ENCODE measurements at regions of chr6 and their contacts with region 1.

Region 1: DNA sequence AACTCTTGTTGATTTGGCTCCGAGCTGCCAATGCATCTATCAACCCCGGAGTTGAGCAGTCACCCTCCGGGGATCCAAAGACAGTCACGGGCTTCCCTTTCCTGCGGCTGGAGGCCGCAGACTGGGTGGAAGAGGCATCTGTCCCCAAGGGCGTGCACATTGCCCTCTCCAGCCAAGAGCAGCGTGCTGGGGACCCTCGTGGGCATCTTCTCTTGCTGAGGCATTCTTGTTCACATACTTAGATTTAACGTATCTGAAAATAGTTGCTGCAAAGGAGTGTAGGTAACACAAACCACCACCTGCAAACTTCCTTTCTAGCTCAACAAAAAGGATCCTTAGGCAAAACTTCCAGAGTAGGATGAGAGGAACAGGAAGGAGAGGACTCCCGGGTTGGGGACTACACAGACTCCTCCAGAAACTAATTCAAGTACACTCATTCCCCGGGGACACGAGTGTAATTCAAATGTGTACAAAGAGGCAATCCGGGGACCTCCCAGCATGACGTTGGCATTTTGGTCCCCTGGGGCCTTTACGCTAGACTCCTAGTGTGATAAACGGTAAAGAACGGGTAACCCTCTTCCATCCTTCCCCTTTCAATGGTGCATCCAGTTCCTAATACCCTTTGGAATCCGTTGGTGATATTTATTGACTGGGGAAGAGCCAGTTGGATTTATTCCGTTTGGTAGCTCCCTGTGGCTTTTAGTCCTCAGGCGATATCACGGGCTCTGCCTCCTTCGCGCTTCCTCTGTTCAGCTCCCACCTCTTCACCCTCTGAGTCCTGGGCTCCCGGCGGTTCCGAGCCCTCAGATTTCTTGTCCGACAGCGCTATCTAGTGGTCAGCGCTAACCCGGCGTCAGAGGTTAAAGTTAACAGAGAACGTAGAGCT is 2.7 kb upstream of the COL12A1 start:
- DNase-seq: peak; percentile 81 to 85
- H3K4me3 ChIP-seq: no peak overlapping the region
- H3K27ac ChIP-seq: no peak overlapping the region
- H3K4me1 ChIP-seq: peaks cover 28 to 43% of the 10 kb centered on the region in 2 donors
- H3K27me3 ChIP-seq: no peaks in the 10 kb centered on the region
- CTCF ChIP-seq: peak; percentile 64 to 92 (median 80)
- POLR2A ChIP-seq: no peak

Region 2: GRCh38 chr6:74091136-74091793 is 1117.3 kb before region 1 on chr6:
- intact Hi-C with region 1: loop called (anchors 5 kb)
- DNase-seq: no peak
- H3K4me3 ChIP-seq: no peak overlapping the region
- H3K27ac ChIP-seq: no peak overlapping the region
- H3K4me1 ChIP-seq: no peaks in the 10 kb centered on the region
- H3K27me3 ChIP-seq: no peaks in the 10 kb centered on the region
- CTCF ChIP-seq: peak; percentile 21 to 67 (median 60)
- POLR2A ChIP-seq: no peak

Region 3: DNA sequence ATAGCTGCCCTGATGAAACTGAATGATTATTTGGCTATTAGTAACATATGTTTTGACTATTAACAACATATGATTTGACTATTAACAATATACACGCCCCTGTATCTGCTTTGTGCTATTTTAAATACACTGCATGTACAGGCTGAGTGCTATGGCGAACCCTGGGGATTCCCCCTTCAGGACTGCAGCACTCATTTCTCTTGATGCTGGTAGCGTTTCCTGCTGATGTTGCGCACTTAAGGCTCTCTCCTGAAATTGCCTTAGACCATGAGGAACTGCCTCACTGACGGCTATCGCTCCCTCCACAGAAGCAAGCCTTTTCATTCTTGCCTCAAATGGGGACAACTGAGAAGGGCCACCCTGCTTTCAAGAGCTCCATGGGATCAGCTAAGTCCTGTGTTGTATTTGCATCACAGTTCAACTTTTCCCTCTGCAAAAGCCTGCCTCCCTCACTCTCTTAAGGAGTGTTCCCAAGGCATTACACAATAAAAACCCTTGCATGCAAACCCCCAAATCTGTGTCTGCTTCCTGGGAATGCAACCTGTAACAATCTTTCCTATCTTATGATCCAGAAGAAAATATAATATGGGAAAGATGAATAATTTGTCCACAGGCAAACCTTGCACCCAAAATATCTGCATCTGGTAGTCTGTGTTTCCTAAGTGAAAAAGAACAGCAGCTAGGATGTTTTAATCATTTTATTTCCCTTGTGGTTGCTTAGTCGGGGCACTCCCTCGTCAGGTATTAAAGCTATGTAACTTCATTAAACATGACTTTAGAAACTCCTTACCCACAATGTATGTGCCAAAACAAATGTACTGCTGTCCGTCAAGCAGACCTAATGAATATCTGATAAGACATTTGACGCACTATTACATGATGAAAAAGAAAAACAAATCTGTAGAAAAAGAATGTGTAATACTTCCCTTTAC is 459.1 kb before region 1 on chr6:
- intact Hi-C with region 1: loop called (anchors 5 kb)
- DNase-seq: no peak
- H3K4me3 ChIP-seq: no peak overlapping the region
- H3K27ac ChIP-seq: no peak overlapping the region
- H3K4me1 ChIP-seq: no peaks in the 10 kb centered on the region
- H3K27me3 ChIP-seq: no peaks in the 10 kb centered on the region
- CTCF ChIP-seq: no peak
- POLR2A ChIP-seq: no peak